Calu3 (cell line): ENCODE measurements at regions of chr1 and their contacts with region 1.

Region 1: DNA sequence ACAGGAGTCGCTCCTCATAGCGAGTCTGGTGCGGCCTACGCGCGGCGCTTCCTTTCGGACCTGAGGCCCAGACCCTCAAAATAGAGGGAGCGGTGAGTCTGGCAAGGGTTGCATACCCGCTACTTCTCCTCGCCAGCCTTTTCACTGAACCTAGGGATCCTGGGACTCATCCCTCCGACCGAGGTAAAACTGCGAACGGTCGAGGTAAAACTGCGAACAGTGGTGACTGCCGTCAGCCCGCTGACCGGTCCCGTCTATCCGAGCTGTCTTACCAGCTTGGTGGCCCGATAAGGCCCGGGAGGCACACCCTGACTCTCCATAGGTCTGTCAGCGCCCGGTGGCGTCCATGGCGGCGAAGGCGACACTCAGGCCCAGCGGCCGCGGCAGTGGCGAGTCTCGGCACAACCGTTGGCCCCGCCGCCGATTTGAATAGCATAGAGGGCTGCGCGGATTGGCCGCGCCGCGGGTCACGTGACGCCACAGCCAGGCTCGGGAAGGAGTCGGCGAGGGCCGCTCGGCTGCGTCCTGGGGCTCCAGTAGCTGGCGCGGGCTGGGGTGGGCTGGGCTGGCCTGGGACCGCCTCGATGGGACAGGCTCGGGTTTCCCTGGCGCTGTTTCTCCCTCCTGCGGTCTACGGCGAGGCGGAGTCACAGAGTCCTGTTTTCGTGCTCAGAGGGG is at the start of gene DEPDC1:
- DNase-seq: peak; percentile 96
- H3K4me3 Mint-ChIP-seq: peak within 1 kb of the TSS; percentile 81
- H3K27ac Mint-ChIP-seq: peak within 1 kb of the TSS; percentile 88
- H3K4me1 Mint-ChIP-seq: peaks cover 30% of the 10 kb centered on the region
- H3K27me3 Mint-ChIP-seq: no peaks in the 10 kb centered on the region
- CTCF ChIP-seq: no peak
- total RNA-seq, gene DEPDC1: 33.0 and 41.7 TPM in 2 replicates

Region 2: GRCh38 chr1:68481041-68481440 is 15.8 kb before region 1 on chr1:
- CTCF ChIA-PET with region 1: no interaction called
- intact Hi-C with region 1: no loop called
- DNase-seq: no peak
- H3K4me3 Mint-ChIP-seq: no peak overlapping the region
- H3K27ac Mint-ChIP-seq: no peak overlapping the region
- H3K4me1 Mint-ChIP-seq: peaks cover 7% of the 10 kb centered on the region
- H3K27me3 Mint-ChIP-seq: no peaks in the 10 kb centered on the region
- CTCF ChIP-seq: no peak

Region 3: GRCh38 chr1:68551459-68551858 is 54.6 kb after region 1 on chr1:
- CTCF ChIA-PET with region 1: interaction called, 3 read pairs
- intact Hi-C with region 1: loop called (anchors 1 kb)
- DNase-seq: no peak
- H3K4me3 Mint-ChIP-seq: no peak overlapping the region
- H3K27ac Mint-ChIP-seq: peak overlapping the region; percentile 78
- H3K4me1 Mint-ChIP-seq: peaks cover 24% of the 10 kb centered on the region
- H3K27me3 Mint-ChIP-seq: no peaks in the 10 kb centered on the region
- CTCF ChIP-seq: no peak

Region 4: GRCh38 chr1:68571454-68572235 is 74.8 kb after region 1 on chr1:
- CTCF ChIA-PET with region 1: no interaction called
- intact Hi-C with region 1: loop called (anchors 5 kb)
- DNase-seq: no peak
- H3K4me3 Mint-ChIP-seq: no peak overlapping the region
- H3K27ac Mint-ChIP-seq: no peak overlapping the region
- H3K4me1 Mint-ChIP-seq: no peaks in the 10 kb centered on the region
- H3K27me3 Mint-ChIP-seq: no peaks in the 10 kb centered on the region
- CTCF ChIP-seq: no peak

Region 5: DNA sequence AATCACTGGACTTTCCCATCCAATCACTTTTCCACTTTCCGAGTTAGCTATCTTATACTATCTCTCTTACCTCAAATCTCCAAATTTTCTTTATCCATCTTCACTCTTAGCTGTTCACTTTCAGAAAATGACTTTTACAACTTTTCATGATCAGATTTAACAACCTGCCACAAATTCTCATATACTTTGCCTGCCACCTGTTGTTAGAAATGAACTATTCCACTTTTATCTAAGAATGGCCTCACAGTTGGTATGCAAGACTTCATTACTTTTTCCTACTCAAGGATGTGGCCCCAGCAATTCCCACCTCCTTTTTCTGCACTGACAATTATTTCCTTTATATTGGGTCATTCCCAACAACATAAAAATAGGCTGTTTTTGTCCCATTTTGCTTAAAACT is 93.7 kb after region 1 on chr1:
- CTCF ChIA-PET with region 1: no interaction called
- intact Hi-C with region 1: loop called (anchors 1 kb)
- DNase-seq: no peak
- H3K4me3 Mint-ChIP-seq: no peak overlapping the region
- H3K27ac Mint-ChIP-seq: no peak overlapping the region
- H3K4me1 Mint-ChIP-seq: peaks cover 16% of the 10 kb centered on the region
- H3K27me3 Mint-ChIP-seq: no peaks in the 10 kb centered on the region
- CTCF ChIP-seq: no peak

Region 6: DNA sequence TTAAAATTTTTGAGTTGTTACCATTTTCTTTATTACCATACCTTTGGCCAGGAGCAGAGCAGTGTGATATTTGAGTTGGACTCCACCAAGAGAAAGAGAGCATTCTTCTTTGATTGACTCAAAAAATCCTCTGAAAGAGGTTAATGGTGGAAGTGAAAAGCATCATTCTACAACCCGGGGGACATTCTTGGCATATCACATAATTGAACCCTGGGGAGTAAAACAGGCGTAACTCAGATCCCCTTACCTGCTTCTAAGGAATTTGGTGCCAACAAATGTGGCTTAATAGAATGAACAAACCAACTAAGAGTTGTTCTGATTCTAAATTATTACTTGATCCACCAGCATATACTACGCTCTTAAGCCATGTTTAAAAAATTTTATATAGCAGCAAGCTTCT is 351.2 kb after region 1 on chr1:
- CTCF ChIA-PET with region 1: no interaction called
- intact Hi-C with region 1: no loop called
- DNase-seq: no peak
- H3K4me3 Mint-ChIP-seq: no peak overlapping the region
- H3K27ac Mint-ChIP-seq: no peak overlapping the region
- H3K4me1 Mint-ChIP-seq: no peaks in the 10 kb centered on the region
- H3K27me3 Mint-ChIP-seq: no peaks in the 10 kb centered on the region
- CTCF ChIP-seq: no peak